Sigmoid colon (tissue), 7 donors: ENCODE measurements at regions of chr9 and their contacts with region 1.

Region 1: DNA sequence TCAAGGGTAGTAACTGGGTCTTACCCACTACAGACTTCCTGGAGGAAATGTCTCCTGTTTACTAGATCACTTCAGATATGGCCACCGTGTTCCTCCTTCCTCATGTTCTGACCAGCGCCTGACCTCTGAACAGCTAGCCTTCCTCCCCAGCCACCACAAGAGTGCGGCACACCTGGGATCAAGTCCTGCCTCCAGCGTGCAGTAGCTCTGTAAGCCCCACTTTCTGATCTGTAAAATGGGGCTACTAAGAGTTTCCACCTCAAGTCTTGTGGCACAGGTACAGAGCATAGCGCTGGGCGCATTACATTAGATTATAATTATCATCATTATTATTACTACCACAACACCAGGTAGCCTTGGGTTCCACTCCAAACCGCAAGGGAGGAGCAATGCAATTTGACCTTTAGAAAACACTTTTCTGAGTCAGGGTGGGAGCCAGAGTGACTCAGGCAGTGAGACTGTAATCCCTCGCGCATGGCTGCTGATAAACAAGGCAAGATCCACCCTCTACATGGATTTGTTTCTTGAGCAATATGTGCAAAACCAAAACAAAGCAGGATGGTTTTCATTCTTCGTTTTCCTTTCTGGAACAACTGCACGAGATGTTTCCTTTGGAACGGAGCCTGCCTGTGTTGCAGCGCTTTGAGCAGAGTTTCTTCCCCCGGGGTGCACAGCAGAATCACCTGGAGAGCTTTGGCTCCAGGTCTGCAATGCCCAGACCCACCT is 65.0 kb upstream of the ANGPTL2 start:
- DNase-seq: peak; percentile 94
- H3K4me3 ChIP-seq: no peak overlapping the region
- H3K27ac ChIP-seq: peak overlapping the region; percentile 84 to 93 (median 88)
- H3K4me1 ChIP-seq: peaks cover 0 to 61% (median 51%) of the 10 kb centered on the region in 4 donors
- H3K27me3 ChIP-seq: no peaks in the 10 kb centered on the region
- CTCF ChIP-seq: no peak
- EP300 ChIP-seq: peak in 2 of 4 donors; percentile 58 to 82
- POLR2A ChIP-seq: no peak

Region 2: GRCh38 chr9:127104465-127105311 is 82.7 kb before region 1 on chr9:
- intact Hi-C with region 1: loop called (anchors 5 kb)
- DNase-seq: no peak
- H3K4me3 ChIP-seq: no peak overlapping the region
- H3K27ac ChIP-seq: peak overlapping the region in 3 of 4 donors; percentile 74 to 95 (median 87)
- H3K4me1 ChIP-seq: peaks cover 0 to 100% (median 94%) of the 10 kb centered on the region in 4 donors
- H3K27me3 ChIP-seq: no peaks in the 10 kb centered on the region
- CTCF ChIP-seq: no peak
- EP300 ChIP-seq: no peak
- POLR2A ChIP-seq: no peak

Region 3: GRCh38 chr9:127122176-127123063 is 65.0 kb before region 1 on chr9 and contains the start of gene ANGPTL2:
- intact Hi-C with region 1: loop called (anchors 2 kb)
- DNase-seq: peak; percentile 99
- H3K4me3 ChIP-seq: peak within 1 kb of the TSS; percentile 67 to 80 (median 69)
- H3K27ac ChIP-seq: peak within 1 kb of the TSS; percentile 94 to 99 (median 96)
- H3K4me1 ChIP-seq: peaks cover 0 to 68% (median 61%) of the 10 kb centered on the region in 4 donors
- H3K27me3 ChIP-seq: no peaks in the 10 kb centered on the region
- CTCF ChIP-seq: peak in 2 of 4 experiments; percentile 6 to 8
- EP300 ChIP-seq: peak in 2 of 4 donors; percentile 51 to 69
- POLR2A ChIP-seq: peak; percentile 85 to 96
- total RNA-seq, gene ANGPTL2: 50.5 to 112 (median 78.8) TPM

Region 4: GRCh38 chr9:127336738-127337251 is 149.4 kb after region 1 on chr9:
- intact Hi-C with region 1: no loop called
- DNase-seq: peak; percentile 93
- H3K4me3 ChIP-seq: no peak overlapping the region
- H3K27ac ChIP-seq: peak overlapping the region; percentile 39 to 80 (median 68)
- H3K4me1 ChIP-seq: peaks cover 0 to 43% (median 21%) of the 10 kb centered on the region in 4 donors
- H3K27me3 ChIP-seq: no peaks in the 10 kb centered on the region
- CTCF ChIP-seq: no peak
- EP300 ChIP-seq: peak in 1 of 4 donors; percentile 38
- POLR2A ChIP-seq: no peak